Left cardiac atrium (tissue), 4 donors: ENCODE measurements at regions of chr5 and their contacts with region 1.

Region 1: GRCh38 chr5:54310433-54311175 is at the start of gene ARL15:
- DNase-seq: peak; percentile 99
- ATAC-seq: peak; percentile 98 to 99
- total RNA-seq, gene ARL15: 19.0 to 22.7 TPM

Region 2: GRCh38 chr5:54254482-54255198 is 56.0 kb before region 1 on chr5:
- intact Hi-C with region 1: loop called (anchors 2 to 10 kb)
- DNase-seq: peak; percentile 31
- ATAC-seq: peak; percentile 86 to 87

Region 3: DNA sequence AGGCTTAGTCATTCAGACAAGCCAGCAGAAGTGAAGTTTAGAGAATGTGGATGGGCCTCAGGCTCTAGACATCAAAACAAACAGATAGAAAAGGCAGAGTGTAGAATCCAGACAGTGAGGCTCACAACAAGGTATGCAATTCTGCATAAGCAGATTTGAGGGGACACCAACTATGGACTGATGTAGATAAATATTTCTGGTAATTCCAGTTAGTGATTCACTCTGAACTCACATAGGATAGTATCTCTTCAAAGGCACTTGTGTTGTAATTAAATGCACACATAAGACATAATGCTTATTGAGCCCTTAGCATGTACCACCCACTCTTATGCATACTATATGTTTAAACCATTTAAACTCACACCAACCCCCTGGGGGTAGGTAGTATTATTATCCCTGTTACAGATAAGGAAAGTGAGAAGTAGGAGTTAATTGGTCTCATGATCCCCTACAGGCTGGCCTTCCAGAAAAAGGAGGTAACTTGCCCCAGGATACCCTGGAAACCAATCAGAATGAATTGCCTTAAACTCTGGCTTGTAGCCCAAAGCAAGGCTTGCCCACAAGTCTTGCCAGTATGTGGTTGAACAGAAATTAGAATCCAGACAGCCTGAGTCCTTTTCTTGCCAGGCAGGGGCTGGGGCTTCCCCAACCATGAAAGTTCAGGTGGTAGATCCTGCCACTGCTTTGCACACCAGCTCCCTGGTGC is 105.4 kb after region 1 on chr5:
- intact Hi-C with region 1: loop called in 1 of 2 experiments (anchors 5 kb)
- DNase-seq: no peak
- ATAC-seq: no peak